HEK293 (cell line): ENCODE measurements at regions of chr7 and their contacts with region 1.

Region 1: GRCh38 chr7:65251851-65252620 is 121.6 kb upstream of the ZNF92 start:
- H3K4me3 ChIP-seq: peak overlapping the region; percentile 85
- H3K27ac ChIP-seq: peak overlapping the region; percentile 75
- H3K4me1 ChIP-seq: no peaks in the 10 kb centered on the region
- CTCF ChIP-seq: no peak

Region 2: GRCh38 chr7:65269150-65269856 is 17.3 kb after region 1 on chr7:
- CTCF ChIA-PET with region 1: interaction called, 3 read pairs
- POLR2A ChIA-PET with region 1: interaction called, 12 read pairs
- H3K4me3 ChIP-seq: peak overlapping the region; percentile 78
- H3K27ac ChIP-seq: peak overlapping the region; percentile 54
- H3K4me1 ChIP-seq: no peaks in the 10 kb centered on the region
- CTCF ChIP-seq: no peak

Region 3: GRCh38 chr7:65307651-65308299 is 55.7 kb after region 1 on chr7:
- CTCF ChIA-PET with region 1: no interaction called
- POLR2A ChIA-PET with region 1: no interaction called
- H3K4me3 ChIP-seq: no peak overlapping the region
- H3K27ac ChIP-seq: no peak overlapping the region
- H3K4me1 ChIP-seq: no peaks in the 10 kb centered on the region
- CTCF ChIP-seq: peak; percentile 68